Transverse colon (tissue), 4 donors: ENCODE measurements at regions of chr5 and their contacts with region 1.

Region 1: DNA sequence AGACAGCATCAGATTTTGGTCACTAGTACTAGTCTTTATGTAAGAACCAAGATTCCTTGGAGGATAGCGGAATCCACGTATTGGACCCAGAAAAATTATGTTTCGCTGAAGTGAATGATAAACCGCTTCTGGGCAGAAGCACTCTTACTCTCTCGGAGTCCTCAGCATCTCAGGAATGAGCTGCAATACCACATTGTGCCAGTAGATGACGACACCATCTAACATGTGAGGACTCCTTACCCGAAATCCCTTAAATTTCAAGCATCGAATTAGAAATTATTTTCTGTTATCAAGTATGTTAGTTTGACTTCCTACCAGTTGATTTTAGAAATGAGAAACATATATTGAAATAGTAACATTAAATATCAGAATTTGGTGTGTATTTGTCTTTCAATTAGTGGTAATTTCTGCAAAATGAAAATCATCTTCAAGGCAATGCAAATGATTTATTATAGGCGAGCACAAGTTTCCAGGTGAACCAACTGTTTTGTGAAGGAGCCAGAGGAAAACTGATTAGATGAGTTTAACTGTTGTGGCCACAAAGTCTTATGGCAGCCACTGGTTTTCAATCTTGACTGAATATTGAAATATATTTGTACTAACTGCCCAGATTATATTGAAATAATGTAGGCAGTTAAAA is 66.0 kb upstream of the CAMK4 start:
- DNase-seq: peak; percentile 68
- H3K4me3 ChIP-seq: no peak overlapping the region
- H3K27ac ChIP-seq: no peak overlapping the region
- H3K4me1 ChIP-seq: peaks cover 0 to 3% (median 0%) of the 10 kb centered on the region in 4 donors
- H3K27me3 ChIP-seq: no peaks in the 10 kb centered on the region
- CTCF ChIP-seq: peak; percentile 94 to 100 (median 99)
- EP300 ChIP-seq: no peak
- POLR2A ChIP-seq: no peak

Region 2: GRCh38 chr5:111278845-111279504 is 120.8 kb after region 1 on chr5:
- in situ Hi-C with region 1: loop called (anchors 5 to 10 kb)
- intact Hi-C with region 1: loop called (anchors 5 kb)
- DNase-seq: peak; percentile 64
- H3K4me3 ChIP-seq: no peak overlapping the region
- H3K27ac ChIP-seq: no peak overlapping the region
- H3K4me1 ChIP-seq: no peaks in the 10 kb centered on the region
- H3K27me3 ChIP-seq: no peaks in the 10 kb centered on the region
- CTCF ChIP-seq: peak; percentile 65 to 72 (median 68)
- EP300 ChIP-seq: no peak
- POLR2A ChIP-seq: no peak